ENCODE measurements at regions of chr5 and their contacts with region 1.

Region 1: DNA sequence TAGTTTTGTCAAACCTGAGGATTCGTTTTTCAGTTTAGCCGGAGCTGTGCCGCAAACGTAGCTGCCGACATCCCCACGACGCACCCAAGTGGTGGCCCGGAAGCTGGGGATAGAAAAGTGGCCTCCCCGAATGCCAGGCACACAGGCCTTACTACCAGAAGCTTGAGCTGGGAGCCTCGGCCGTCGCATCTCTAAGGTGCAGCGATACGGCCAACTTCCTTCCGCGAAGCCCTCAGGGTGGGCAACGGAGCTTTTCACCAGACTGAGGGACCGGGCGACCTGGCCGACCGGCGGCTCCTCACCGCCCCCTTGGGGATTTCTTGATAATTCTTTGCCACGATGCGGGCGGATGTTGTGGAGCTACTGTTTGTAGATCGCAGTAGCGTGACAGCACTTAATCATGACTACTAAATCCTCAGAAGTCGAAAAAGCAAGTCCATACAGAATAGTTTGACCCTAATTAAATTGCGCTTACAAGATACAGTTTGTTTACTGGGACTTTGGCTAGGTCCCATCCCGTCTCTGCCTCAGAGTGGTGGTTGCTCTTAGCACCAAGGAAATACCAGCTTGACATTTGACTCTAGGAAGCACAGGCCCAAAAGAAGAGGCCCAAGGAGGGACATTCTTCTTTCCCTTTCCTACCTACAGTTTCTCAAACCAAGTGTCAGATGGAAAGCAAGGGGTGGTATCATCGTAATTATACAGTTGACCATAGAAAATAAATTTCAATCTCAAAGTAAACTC is 613 bp upstream of the TMEM267 start:
- DNase-seq: peak; percentile 89
- H3K4me3 ChIP-seq: peak overlapping the region; percentile 69 to 98 (median 84)
- H3K27ac ChIP-seq: peak overlapping the region; percentile 95 to 98 (median 96)
- H3K4me1 ChIP-seq: peaks cover 0 to 26% (median 15%) of the 10 kb centered on the region in 4 donors
- H3K27me3 ChIP-seq: no peaks in the 10 kb centered on the region
- CTCF ChIP-seq: peak; percentile 67 to 90 (median 82)
- EP300 ChIP-seq: no peak
- POLR2A ChIP-seq: peak; percentile 76

Region 2: DNA sequence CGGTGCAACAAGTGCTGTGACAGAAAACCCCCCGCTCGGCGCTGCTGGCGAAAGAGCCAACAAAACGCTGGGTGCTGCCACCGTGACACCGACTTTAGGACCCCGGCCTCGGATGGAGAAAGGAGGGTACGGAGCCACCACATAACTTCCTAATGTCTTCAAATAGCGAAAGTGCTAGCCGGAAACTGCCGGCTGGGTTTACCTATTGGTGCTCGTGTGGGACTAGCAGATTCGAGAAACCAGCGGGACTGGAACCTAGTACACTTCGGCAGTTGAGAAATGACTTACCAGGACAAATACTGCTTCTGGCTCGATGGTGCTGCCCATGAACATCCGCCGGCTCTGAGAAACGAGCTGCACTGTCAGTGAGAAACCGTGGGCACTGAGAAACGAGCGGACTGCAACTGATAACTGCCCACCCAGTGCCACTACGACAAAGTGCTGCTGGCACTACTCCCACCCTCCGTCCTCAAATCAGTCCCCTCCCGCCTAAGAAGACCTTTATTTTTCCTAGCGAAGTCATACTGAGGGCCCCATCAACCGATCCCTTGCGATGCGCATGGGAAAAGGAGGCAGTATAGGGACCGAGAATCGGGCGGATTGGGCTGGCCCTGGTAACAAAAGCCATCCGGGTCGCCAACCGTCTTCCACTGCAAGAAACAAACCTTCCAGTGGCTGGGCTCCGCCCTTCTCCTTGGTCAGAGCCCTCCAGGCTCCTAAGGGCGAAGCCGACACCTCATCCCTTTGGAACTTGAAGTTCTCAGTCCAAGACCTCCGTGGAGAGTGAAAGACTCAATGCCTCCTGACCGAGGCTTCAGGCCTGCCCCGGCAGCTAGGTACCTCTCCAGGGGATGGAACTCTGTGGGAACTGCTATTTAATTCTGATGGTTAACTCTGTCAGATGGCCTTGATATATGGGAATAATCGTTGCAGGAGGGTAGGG is 417.2 kb before region 1 on chr5:
- in situ Hi-C with region 1: loop called in 1 of 4 experiments (anchors 25 kb)
- intact Hi-C with region 1: no loop called
- DNase-seq: peak; percentile 91
- H3K4me3 ChIP-seq: peak overlapping the region; percentile 57 to 86 (median 76)
- H3K27ac ChIP-seq: peak overlapping the region; percentile 95 to 100 (median 98)
- H3K4me1 ChIP-seq: peaks cover 15 to 41% (median 26%) of the 10 kb centered on the region in 4 donors
- H3K27me3 ChIP-seq: no peaks in the 10 kb centered on the region
- CTCF ChIP-seq: no peak
- EP300 ChIP-seq: no peak
- POLR2A ChIP-seq: peak; percentile 50

Region 3: GRCh38 chr5:43313035-43313853 is 171.0 kb before region 1 on chr5 and contains the start of gene HMGCS1:
- in situ Hi-C with region 1: loop called (anchors 25 kb)
- intact Hi-C with region 1: no loop called
- DNase-seq: peak; percentile 99
- H3K4me3 ChIP-seq: peak within 1 kb of the TSS; percentile 53 to 85 (median 74)
- H3K27ac ChIP-seq: peak within 1 kb of the TSS; percentile 90 to 96 (median 94)
- H3K4me1 ChIP-seq: peaks cover 9 to 42% (median 21%) of the 10 kb centered on the region in 4 donors
- H3K27me3 ChIP-seq: no peaks in the 10 kb centered on the region
- CTCF ChIP-seq: peak in 1 of 5 experiments; percentile 27
- EP300 ChIP-seq: no peak
- POLR2A ChIP-seq: peak; percentile 97
- total RNA-seq, gene HMGCS1: 16.9 to 51.4 (median 41.8) TPM

Region 4: DNA sequence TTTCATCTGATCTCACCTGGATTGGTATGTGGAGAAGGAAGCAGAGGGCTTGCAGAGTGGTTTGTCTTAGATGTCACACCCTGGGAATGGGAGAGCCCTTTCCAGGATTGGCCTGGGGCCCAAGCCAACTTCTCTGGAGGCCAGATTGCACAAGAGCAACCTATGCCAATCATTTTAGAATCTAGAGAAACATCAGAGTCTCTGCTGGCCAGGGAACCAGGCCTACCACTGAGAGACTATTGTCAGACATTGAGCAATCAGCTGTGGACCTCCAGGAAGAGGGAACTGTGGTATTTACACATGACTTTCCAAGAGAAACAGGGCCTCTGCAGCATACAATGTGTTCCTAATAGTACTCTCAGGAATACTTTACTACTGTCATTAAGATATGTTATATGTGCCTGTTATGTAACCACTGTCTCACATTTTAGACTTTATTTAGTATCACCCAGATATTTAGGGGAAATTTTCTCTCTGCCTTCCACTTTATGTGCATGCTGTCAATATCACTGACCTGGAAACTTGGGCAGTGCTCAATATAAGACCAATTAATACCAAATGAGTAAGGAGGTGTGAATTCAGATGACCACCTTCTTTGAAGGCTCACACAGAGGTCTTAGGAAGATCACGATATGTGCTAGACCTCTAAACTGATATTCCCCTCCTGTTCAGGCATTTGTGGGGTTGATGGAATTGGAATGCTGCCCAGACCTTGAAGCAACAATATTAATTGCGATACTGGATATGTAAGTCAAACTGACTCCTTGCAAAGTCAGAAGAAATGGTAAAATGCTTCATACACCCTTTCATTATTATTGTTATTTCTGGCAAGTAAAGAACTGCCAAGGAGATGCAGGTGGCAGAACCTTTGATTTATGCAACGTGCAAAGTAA is 51.6 kb before region 1 on chr5:
- in situ Hi-C with region 1: no loop called
- intact Hi-C with region 1: no loop called
- DNase-seq: peak; percentile 85
- H3K4me3 ChIP-seq: no peak overlapping the region
- H3K27ac ChIP-seq: peak overlapping the region; percentile 36 to 62 (median 58)
- H3K4me1 ChIP-seq: peaks cover 4 to 20% (median 10%) of the 10 kb centered on the region in 4 donors
- H3K27me3 ChIP-seq: no peaks in the 10 kb centered on the region
- CTCF ChIP-seq: no peak
- EP300 ChIP-seq: no peak
- POLR2A ChIP-seq: no peak

Region 5: DNA sequence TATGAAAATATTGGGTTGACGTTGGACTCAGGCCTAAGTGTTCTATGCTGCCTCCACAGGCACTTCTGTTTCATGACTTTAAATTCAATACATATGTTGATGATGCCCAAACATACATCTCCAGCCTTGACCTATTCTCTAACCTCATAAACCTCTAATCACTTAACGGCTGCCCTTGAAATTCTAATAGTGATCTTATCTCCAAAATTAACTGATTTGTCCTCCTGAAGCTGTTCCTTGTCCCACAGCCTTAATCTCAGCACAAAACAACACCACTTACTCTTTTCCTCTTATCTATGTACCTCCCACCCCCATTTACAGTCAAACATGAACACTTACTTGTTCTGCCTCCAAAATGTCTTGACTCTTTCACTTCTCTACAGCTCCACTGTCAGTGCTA is 861.6 kb after region 1 on chr5:
- in situ Hi-C with region 1: no loop called
- intact Hi-C with region 1: no loop called
- DNase-seq: no peak
- H3K4me3 ChIP-seq: no peak overlapping the region
- H3K27ac ChIP-seq: no peak overlapping the region
- H3K4me1 ChIP-seq: no peaks in the 10 kb centered on the region
- H3K27me3 ChIP-seq: no peaks in the 10 kb centered on the region
- CTCF ChIP-seq: no peak
- EP300 ChIP-seq: no peak
- POLR2A ChIP-seq: no peak